ENCODE measurements at regions of chr12 and their contacts with region 1.

Region 1: DNA sequence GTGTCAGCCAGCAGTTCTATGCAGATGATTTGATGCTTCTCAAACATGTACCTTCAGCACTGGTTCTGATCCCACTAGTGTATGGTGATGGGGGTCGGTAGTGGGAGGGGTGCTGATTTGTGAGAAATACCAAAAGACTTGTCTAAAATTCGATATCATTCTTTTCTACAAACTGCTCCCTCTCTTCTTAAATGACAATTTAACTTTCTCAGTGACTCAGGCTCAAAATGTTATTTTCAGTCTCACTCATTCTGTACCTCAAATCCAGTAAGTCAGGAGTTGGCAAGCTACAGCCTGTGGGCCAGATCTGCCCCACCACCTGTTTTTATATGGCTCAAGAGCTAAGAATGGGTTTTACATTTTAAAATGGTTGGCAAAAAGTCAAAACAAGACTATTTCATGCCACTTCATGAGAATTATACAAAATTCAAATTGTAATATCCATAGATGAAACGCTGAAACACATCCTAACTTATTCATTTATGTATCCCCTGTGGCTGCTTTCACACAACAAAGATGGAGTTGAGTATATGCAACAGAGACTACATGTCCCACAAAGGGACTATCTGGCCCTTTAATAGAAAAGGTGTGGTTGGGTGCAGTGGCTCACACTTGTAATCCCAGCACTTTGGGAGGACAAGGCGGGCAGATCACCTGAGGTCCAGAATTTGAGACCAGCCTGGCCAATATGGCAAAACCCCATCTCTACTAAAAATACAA is 6.6 kb upstream of the NOP2 start:
- DNase-seq: peak; percentile 59
- H3K4me3 Mint-ChIP-seq: no peak overlapping the region
- H3K27ac Mint-ChIP-seq: peak overlapping the region; percentile 87
- H3K4me1 Mint-ChIP-seq: peaks cover 45% of the 10 kb centered on the region
- H3K27me3 Mint-ChIP-seq: no peaks in the 10 kb centered on the region

Region 2: DNA sequence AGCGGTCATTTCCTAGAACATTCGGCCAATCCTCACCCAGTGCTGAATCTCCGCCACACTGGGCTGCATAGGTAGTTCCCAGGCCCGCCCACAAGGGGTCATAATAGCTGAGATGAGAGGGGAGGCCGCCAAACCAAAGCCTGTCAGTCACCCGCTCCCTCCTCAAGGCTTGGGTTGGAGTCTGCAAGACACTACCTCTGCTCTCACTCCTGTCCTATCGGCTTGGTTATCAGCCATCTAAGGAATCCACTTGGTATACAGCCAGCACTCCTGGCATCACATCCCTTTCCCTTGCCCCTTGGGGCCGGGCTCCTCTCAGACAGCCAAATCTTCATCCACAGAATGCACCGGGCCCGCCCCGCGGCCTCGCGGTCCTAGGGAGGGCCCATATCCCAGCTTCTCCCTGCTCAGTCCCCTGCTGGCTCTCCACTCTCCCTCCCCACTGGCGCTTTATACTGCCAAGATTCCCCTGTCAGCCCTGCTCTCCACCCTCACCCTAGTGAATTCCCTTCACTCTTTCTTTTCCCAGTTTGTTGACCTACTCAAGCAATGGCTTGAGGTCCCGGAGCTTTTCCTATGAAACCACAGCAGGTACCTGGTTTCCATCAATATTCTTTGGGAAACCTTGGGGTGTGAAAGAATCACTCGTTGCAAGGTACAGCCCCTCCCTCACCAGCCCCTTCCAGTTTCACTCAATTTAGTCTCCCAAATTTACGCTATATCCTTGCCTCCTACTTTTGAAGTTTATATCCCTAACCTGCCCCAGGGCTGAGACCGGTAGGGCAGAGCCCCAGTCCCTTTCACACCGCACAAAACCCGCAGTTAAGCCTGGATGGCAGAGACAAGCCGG is 20.3 kb before region 1 on chr12:
- CTCF ChIA-PET with region 1: interaction called, 6 read pairs
- intact Hi-C with region 1: loop called (anchors 2 kb)
- DNase-seq: peak; percentile 86
- H3K4me3 Mint-ChIP-seq: peak overlapping the region; percentile 78
- H3K27ac Mint-ChIP-seq: peak overlapping the region; percentile 1
- H3K4me1 Mint-ChIP-seq: peaks cover 52% of the 10 kb centered on the region
- H3K27me3 Mint-ChIP-seq: no peaks in the 10 kb centered on the region

Region 3: DNA sequence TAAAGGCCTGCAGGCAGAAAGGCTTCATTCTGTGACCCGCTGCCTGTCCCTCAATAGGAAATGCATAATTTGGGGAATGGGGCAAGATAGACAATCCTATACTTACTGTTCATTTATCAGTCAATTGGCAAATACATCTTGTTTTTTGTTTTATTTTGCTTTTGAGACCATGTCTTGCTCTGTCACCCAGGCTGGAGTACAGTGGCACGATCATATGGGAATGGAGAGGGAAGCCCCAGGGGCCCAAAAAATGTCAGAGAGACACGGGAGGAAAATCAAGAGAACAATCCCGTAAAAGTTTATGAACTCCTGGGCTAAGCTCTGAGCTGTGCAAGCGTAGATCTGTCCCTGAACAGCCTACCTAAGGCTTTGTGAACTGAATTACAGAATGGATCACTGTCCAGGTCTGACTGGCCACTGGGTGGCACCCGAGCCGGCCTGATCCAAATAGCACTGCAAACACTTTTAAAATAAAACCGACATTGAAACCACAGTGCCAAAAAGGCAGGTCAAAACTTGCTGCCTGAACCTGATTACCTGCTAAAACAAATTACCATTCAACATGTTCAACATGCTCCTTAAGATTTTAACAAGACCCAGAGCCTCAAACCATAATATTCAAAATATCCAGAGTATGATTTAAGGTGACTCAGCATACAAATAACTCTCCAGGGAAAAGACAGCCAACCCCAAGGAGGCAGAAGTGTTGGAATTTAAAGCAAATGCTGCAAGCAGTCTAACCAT is 160.9 kb after region 1 on chr12:
- CTCF ChIA-PET with region 1: no interaction called
- intact Hi-C with region 1: no loop called
- DNase-seq: peak; percentile 72
- H3K4me3 Mint-ChIP-seq: no peak overlapping the region
- H3K27ac Mint-ChIP-seq: peak overlapping the region; percentile 53
- H3K4me1 Mint-ChIP-seq: peaks cover 6% of the 10 kb centered on the region
- H3K27me3 Mint-ChIP-seq: no peaks in the 10 kb centered on the region

Measured in activated naive CD4-positive, alpha-beta T cell treated with anti-CD3 and anti-CD28 coated beads for 36 hours (primary cell).